PC-9 (cell line): ENCODE measurements at regions of chr2 and their contacts with region 1.

Region 1: GRCh38 chr2:179946810-179947615 is 60.1 kb downstream of the CWC22 start:
- DNase-seq: no peak
- H3K4me3 ChIP-seq: no peak overlapping the region
- H3K27ac ChIP-seq: no peak overlapping the region
- H3K4me1 ChIP-seq: no peaks in the 10 kb centered on the region
- H3K27me3 ChIP-seq: no peaks in the 10 kb centered on the region
- CTCF ChIP-seq: no peak

Region 2: GRCh38 chr2:179898873-179899272 is 48.1 kb before region 1 on chr2:
- CTCF ChIA-PET with region 1: no interaction called
- POLR2A ChIA-PET with region 1: no interaction called
- intact Hi-C with region 1: no loop called
- DNase-seq: peak in 1 of 2 experiments; percentile 16
- H3K4me3 ChIP-seq: no peak overlapping the region
- H3K27ac ChIP-seq: no peak overlapping the region
- H3K4me1 ChIP-seq: no peaks in the 10 kb centered on the region
- H3K27me3 ChIP-seq: no peaks in the 10 kb centered on the region
- CTCF ChIP-seq: peak; percentile 66

Region 3: GRCh38 chr2:179981085-179981484 is 34.1 kb after region 1 on chr2:
- CTCF ChIA-PET with region 1: no interaction called
- POLR2A ChIA-PET with region 1: no interaction called
- intact Hi-C with region 1: loop called (anchors 5 kb)
- DNase-seq: no peak
- H3K4me3 ChIP-seq: no peak overlapping the region
- H3K27ac ChIP-seq: no peak overlapping the region
- H3K4me1 ChIP-seq: no peaks in the 10 kb centered on the region
- H3K27me3 ChIP-seq: no peaks in the 10 kb centered on the region
- CTCF ChIP-seq: no peak